ENCODE measurements at regions of chr1 and their contacts with region 1.

Region 1: GRCh38 chr1:222570837-222571236 is 18.9 kb downstream of the TAF1A start:
- DNase-seq: no peak
- ATAC-seq: no peak

Region 2: DNA sequence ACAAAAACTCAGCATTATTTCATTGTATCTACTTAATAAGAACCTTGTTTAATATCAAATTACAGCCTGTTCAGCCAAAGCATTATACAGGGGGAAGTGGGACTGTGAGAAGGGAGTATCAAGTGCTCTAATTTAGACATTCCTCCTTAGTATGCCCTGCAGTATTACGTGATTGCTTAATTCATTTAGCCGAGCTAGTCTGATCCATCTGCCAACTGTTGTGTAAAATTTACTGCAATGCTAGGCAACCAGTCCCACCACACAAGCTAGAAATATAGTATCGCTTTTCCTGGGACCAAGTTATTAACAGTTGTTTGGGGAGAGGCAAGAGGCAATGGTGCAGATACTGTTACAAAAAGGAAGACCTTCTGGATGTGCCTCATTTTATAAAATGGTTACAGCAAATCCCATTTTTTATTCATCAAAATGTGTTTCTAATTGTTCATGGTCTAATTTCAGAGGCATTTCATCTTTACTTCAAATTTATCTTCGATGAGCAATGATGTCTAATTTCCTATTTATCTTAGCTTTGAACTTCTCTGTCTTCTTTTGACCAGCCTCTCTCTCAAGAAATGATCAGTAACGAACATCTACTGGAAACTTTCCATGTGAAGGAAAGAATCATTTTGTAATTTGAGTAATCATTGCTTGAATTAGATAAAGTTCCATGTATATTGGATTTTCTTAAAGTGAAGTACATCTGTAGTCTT is 1112.2 kb before region 1 on chr1:
- intact Hi-C with region 1: loop called (anchors 5 kb)
- DNase-seq: no peak
- ATAC-seq: peak; percentile 89